ENCODE measurements at regions of chr6 and their contacts with region 1.

Region 1: GRCh38 chr6:148578245-148578732 is 168.5 kb upstream of the UST start:
- DNase-seq: peak; percentile 54
- ATAC-seq: peak; percentile 91
- H3K4me3 Mint-ChIP-seq: no peak overlapping the region
- H3K27ac Mint-ChIP-seq: no peak overlapping the region
- H3K4me1 Mint-ChIP-seq: no peaks in the 10 kb centered on the region
- H3K27me3 Mint-ChIP-seq: peaks cover 31% of the 10 kb centered on the region

Region 2: GRCh38 chr6:148559848-148560433 is 18.3 kb before region 1 on chr6:
- CTCF ChIA-PET with region 1: interaction called, 11 read pairs
- POLR2A ChIA-PET with region 1: no interaction called
- DNase-seq: peak; percentile 73
- ATAC-seq: peak; percentile 87
- H3K4me3 Mint-ChIP-seq: no peak overlapping the region
- H3K27ac Mint-ChIP-seq: no peak overlapping the region
- H3K4me1 Mint-ChIP-seq: peaks cover 14% of the 10 kb centered on the region
- H3K27me3 Mint-ChIP-seq: peaks cover 34% of the 10 kb centered on the region